Panc1 (cell line): ENCODE measurements at regions of chr5 and their contacts with region 1.

Region 1: GRCh38 chr5:127001621-127002296 is 28.6 kb downstream of the MARCHF3 start:
- DNase-seq: no peak
- ATAC-seq: no peak
- H3K4me3 ChIP-seq: no peak overlapping the region
- H3K27ac ChIP-seq: no peak overlapping the region
- H3K4me1 ChIP-seq: no peaks in the 10 kb centered on the region
- H3K27me3 ChIP-seq: no peaks in the 10 kb centered on the region
- CTCF ChIP-seq: no peak

Region 2: DNA sequence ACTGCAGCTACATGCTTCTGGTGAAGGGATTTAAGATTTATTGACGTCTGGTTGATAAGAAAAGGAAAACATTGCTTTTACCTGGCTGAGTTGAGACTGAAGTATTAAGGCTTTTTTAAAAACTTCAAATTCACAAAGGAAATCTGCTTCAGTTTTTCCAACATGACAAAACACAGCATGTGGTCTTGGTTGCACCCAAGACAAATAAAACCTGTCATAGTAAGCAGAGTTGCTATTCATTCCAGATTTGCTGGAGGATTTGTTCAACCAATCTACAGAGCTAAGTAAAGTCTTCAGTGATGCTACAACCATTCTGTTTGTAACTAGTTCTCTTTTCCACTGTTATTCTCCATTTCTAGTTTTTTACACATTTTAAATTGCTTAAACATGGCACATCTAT is 60.2 kb after region 1 on chr5:
- CTCF ChIA-PET with region 1: no interaction called
- POLR2A ChIA-PET with region 1: no interaction called
- in situ Hi-C with region 1: no loop called
- intact Hi-C with region 1: loop called (anchors 2 kb)
- DNase-seq: no peak
- ATAC-seq: no peak
- H3K4me3 ChIP-seq: no peak overlapping the region
- H3K27ac ChIP-seq: no peak overlapping the region
- H3K4me1 ChIP-seq: no peaks in the 10 kb centered on the region
- H3K27me3 ChIP-seq: no peaks in the 10 kb centered on the region
- CTCF ChIP-seq: no peak